Gastrocnemius medialis (tissue), 4 donors: ENCODE measurements at regions of chr21 and their contacts with region 1.

Region 1: GRCh38 chr21:37087188-37087587 is 14.1 kb downstream of the TTC3 start:
- DNase-seq: peak; percentile 3 to 16
- ATAC-seq: peak; percentile 66 to 84
- H3K4me3 ChIP-seq: no peak overlapping the region
- H3K27ac ChIP-seq: peak overlapping the region; percentile 59 to 68 (median 64)
- H3K4me1 ChIP-seq: peaks cover 25 to 28% of the 10 kb centered on the region in 2 donors
- H3K27me3 ChIP-seq: no peaks in the 10 kb centered on the region
- CTCF ChIP-seq: peak in 1 of 5 experiments; percentile 42
- POLR2A ChIP-seq: no peak

Region 2: DNA sequence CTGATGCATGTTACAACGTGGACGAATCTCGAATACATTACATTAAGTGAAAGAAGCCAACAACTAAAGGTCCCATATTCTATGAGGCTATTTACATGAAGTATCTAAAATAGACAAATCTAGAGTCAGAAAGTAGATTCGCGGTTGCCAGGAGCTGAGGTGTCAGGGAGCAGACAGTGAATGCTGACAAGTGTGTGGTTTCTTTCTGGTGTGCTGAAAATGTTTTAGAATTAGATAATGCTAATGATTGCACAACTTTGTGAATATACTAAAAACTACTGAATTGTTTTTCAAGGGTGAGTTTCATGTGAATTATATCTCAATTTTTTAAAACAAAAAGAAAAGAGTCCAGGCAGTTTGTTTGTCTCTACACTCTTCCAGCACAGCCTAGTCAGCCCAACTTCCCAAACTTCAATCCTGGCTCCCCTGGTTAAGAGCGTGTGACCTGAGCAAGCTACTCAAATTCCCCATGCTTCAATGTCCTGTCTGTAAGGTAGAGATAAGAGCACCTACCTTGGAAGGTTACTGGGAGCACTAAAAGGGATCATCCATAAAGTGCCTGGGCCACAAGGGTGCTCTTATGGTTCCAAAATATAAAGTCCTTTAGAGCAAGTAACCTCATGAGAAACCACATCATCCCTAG is 141.6 kb before region 1 on chr21:
- in situ Hi-C with region 1: no loop called
- intact Hi-C with region 1: no loop called
- DNase-seq: no peak
- ATAC-seq: no peak
- H3K4me3 ChIP-seq: no peak overlapping the region
- H3K27ac ChIP-seq: no peak overlapping the region
- H3K4me1 ChIP-seq: no peaks in the 10 kb centered on the region
- H3K27me3 ChIP-seq: no peaks in the 10 kb centered on the region
- CTCF ChIP-seq: no peak
- POLR2A ChIP-seq: no peak

Region 3: DNA sequence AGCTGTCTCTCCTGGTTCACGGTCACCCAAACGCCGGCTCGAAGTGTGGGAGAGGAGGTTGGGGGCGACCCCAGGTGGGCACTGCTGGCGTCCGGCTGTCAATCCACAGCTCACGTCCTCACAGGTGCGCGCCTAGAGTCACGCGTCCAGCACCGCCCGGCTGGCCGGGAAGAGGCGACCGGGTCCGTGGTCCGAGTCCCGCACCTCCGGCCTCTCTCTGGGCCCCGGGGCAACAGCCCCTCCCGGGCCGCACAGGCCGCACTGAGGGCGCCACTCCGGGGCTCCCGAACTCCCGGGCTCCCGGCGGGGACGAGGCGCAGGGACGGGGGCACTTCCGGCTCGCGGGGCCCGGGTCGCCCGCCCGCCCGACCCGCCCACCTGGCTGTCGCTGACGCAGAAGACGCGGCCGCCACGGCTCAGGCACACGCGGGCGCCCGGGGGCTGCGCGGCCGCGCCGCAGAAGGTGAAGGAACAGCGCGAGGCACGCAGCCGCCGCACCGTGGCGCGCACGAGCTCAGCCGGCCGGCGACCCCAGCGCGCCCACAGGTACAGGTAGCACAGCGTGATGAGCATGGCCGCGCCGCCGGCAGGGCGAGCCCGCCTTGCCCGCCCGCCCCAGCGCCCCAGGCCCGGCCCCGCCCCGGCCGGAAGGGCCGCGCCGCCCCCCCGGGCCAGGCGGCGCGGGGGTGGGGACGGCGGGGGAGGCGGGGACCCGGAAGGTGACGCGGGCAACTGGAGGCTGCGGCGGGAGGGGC is 120.9 kb before region 1 on chr21 and contains the start of gene HLCS:
- in situ Hi-C with region 1: no loop called
- intact Hi-C with region 1: loop called (anchors 10 kb)
- DNase-seq: peak; percentile 17 to 60
- ATAC-seq: peak; percentile 70 to 75
- H3K4me3 ChIP-seq: peak within 1 kb of the TSS; percentile 65 to 78 (median 70)
- H3K27ac ChIP-seq: peak within 1 kb of the TSS; percentile 73 to 89 (median 84)
- H3K4me1 ChIP-seq: peaks cover 9 to 23% of the 10 kb centered on the region in 2 donors
- H3K27me3 ChIP-seq: no peaks in the 10 kb centered on the region
- CTCF ChIP-seq: peak in 3 of 5 experiments; percentile 11 to 47 (median 21)
- POLR2A ChIP-seq: peak in 1 of 2 donors; percentile 67
- total RNA-seq, gene HLCS: 10.6 to 18.4 (median 15.4) TPM

Region 4: GRCh38 chr21:37193006-37193405 is 105.8 kb after region 1 on chr21:
- in situ Hi-C with region 1: no loop called
- intact Hi-C with region 1: no loop called
- DNase-seq: no peak
- ATAC-seq: no peak
- H3K4me3 ChIP-seq: no peak overlapping the region
- H3K27ac ChIP-seq: no peak overlapping the region
- H3K4me1 ChIP-seq: no peaks in the 10 kb centered on the region
- H3K27me3 ChIP-seq: no peaks in the 10 kb centered on the region
- CTCF ChIP-seq: no peak
- POLR2A ChIP-seq: no peak